Spleen (tissue), 13 donors: ENCODE measurements at regions of chr1 and their contacts with region 1.

Region 1: DNA sequence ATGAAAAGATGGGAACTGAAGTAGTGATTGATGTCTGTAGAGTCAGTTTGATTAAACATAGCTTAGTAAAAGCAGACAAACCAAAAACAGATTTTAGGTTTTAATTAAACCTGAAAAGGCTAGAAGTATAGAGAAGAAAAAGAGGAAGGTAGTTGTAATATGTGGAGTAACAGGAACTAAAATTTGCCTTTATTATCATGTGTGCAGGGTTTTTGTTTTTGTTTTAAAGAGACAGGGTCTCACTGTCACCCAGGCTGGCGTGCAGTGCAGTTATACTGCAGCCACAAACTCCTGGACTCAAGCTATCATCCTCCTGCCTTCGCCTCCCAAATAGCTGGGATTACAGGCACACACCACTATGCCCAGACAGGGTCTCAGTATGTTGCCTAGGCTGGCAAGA is 6.0 kb downstream of the TOR1AIP1 start:
- DNase-seq: no peak
- H3K4me3 ChIP-seq: peak overlapping the region in 1 of 8 donors; percentile 8
- H3K27ac ChIP-seq: peak overlapping the region in 7 of 8 donors; percentile 4 to 57 (median 49)
- H3K4me1 ChIP-seq: peaks cover 34 to 71% (median 61%) of the 10 kb centered on the region in 6 donors
- H3K27me3 ChIP-seq: no peaks in the 10 kb centered on the region
- CTCF ChIP-seq: no peak
- POLR2A ChIP-seq: no peak

Region 2: GRCh38 chr1:179728271-179728670 is 159.8 kb before region 1 on chr1:
- intact Hi-C with region 1: no loop called
- DNase-seq: no peak
- H3K4me3 ChIP-seq: no peak overlapping the region
- H3K27ac ChIP-seq: no peak overlapping the region
- H3K4me1 ChIP-seq: no peaks in the 10 kb centered on the region
- H3K27me3 ChIP-seq: peaks cover 0 to 26% (median 0%) of the 10 kb centered on the region in 7 donors
- CTCF ChIP-seq: no peak
- POLR2A ChIP-seq: no peak

Region 3: GRCh38 chr1:179954493-179955297 is 66.6 kb after region 1 on chr1 and contains the start of gene CEP350:
- intact Hi-C with region 1: loop called (anchors 5 kb)
- DNase-seq: peak; percentile 100
- H3K4me3 ChIP-seq: peak within 1 kb of the TSS; percentile 62 to 95 (median 86)
- H3K27ac ChIP-seq: peak within 1 kb of the TSS; percentile 89 to 98 (median 97)
- H3K4me1 ChIP-seq: peaks cover 18 to 77% (median 60%) of the 10 kb centered on the region in 6 donors
- H3K27me3 ChIP-seq: no peaks in the 10 kb centered on the region
- CTCF ChIP-seq: peak in 8 of 11 experiments; percentile 15 to 70 (median 50)
- POLR2A ChIP-seq: peak; percentile 14 to 82 (median 78)
- total RNA-seq, gene CEP350: 60.2 to 89.2 (median 66.3) TPM